Activated T-helper 1 cell treated with anti-CD3 and anti-CD28 coated beads, Interleukin-12 subunit alpha, Interleukin-12 subunit beta, Interleukin-2, Interleukin-4 antibody, amounts not matched to agents 30 ng/mL and 10 ng/mL and 1 ng/mL, durations not matched to agents 14 hours and 24 hours and 36 hours (primary cell): ENCODE measurements at regions of chr18 and their contacts with region 1.

Region 1: DNA sequence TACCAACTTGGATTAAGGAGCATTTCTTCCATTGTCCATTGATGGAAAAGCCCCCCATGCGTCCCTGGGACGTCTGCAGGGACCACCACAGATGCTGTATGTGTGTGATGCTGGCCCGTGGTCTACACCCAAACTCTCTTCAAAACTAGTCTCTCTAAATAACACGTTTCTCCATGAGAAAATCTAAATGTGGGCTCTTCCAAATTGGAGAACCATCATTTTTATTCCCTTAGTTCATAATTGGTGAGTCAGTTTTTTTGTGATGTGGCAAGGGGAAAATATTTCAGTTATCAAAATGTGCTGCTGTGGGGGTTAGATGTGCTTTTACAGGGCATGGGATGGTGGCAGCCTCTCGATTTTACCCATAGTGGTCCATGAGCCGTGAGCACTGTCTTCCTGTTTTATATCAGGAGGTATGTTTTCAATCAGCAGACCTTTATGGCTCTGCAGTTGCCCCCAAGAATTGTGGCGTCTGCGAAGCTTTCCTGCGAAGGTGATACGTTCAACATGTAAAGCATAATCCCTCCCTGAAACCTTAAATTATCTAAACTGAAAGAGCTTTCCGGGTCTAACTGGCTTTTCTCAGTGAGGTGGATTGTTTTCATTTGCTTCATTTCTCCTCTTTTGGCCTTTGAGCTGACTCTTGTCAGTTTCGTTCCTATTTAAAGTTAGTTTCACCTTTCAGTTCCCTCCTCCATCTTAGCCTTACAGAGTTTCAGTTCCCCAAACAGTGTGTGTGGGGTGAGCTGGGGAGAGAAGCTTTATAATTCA is 78.4 kb downstream of the SETBP1 start:
- DNase-seq: peak; percentile 14
- H3K4me3 Mint-ChIP-seq: peak overlapping the region; percentile 75
- H3K27ac Mint-ChIP-seq: peak overlapping the region; percentile 98
- H3K4me1 Mint-ChIP-seq: peaks cover 51% of the 10 kb centered on the region
- H3K27me3 Mint-ChIP-seq: peaks cover 5% of the 10 kb centered on the region

Region 2: GRCh38 chr18:44725300-44726096 is 33.5 kb before region 1 on chr18:
- intact Hi-C with region 1: loop called (anchors 1 kb)
- DNase-seq: peak; percentile 72
- H3K4me3 Mint-ChIP-seq: peak overlapping the region; percentile 38
- H3K27ac Mint-ChIP-seq: peak overlapping the region; percentile 88
- H3K4me1 Mint-ChIP-seq: peaks cover 96% of the 10 kb centered on the region
- H3K27me3 Mint-ChIP-seq: no peaks in the 10 kb centered on the region

Region 3: DNA sequence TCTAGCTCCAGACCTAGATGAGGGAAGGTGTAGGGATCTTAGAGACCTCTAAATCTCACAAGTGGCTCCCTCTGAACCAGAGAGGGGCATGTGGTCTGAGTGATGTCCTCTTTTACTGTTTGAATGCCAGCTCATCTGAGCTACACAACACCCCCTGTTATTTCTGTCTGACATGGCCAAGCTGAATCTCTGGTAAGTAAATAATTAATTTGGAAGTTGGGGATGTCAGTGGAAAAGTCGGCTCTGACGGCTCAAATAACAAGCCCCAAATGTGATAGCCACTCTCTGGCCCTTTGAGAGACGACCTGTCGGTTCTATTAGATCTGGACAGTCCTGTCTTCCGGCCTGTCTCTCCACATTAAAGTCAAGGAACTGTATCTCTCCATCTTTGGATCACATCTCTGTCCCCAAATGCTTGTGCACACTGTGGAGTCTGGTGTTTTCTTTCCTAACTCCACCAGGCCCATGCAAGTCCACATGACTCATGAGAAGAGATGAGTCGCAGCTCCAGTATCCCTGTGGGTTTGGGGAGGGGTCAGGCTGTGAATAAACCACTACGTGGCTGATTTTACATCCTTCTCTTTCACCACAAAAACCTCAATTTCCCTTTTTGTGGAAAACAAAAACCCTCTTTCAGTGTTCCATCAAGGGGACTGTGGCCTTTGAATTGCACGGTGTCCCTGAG is 25.8 kb before region 1 on chr18:
- intact Hi-C with region 1: loop called (anchors 1 kb)
- DNase-seq: peak; percentile 11
- H3K4me3 Mint-ChIP-seq: peak overlapping the region; percentile 61
- H3K27ac Mint-ChIP-seq: peak overlapping the region; percentile 79
- H3K4me1 Mint-ChIP-seq: peaks cover 79% of the 10 kb centered on the region
- H3K27me3 Mint-ChIP-seq: no peaks in the 10 kb centered on the region

Region 4: DNA sequence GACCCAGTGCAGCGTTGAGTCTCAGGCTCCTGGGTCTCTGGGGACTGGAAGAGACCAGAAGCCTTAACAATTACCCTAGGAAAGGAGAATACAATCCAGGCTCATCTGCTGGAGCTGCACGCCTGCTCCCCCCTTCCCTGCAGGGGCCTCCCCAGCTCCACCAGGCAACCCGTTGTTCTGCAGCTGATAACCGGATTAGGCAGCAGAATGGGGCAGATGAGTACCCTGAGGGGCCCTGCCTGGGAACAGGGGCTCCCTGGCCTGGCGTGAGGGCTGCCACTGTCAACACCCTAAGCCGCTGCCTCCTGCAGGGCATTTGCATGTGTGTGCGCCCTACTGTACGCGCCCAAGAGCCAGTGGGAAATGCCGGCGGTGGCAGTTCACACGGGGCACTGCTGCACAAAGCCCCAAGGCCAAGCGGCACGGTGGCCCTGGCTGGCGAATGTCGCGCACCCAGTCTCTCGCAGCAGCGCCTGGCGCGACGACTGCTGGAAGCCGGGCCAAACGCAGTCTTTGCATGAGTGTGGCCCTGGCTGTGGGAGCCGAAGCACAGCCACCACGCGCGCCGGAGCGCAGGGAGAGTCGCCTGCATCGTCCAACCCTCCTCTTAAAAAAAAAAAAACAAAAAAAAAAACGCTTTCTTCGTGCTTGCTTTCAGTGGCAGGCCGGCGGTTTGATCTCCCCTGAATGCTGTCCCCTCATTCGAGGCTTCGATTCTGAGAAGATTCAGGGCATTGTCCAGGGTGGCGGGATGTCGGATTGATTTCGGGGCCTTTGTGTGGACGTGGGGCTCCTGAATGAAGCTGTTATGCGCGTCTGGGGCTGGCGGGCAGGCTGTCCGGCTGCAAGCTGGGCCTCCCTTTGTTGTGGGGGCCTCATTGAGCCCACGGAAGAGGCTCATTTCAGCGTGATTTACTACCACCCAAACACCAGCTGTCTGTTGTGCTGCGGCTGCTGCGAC is 14.6 kb before region 1 on chr18:
- intact Hi-C with region 1: no loop called
- DNase-seq: no peak
- H3K4me3 Mint-ChIP-seq: no peak overlapping the region
- H3K27ac Mint-ChIP-seq: no peak overlapping the region
- H3K4me1 Mint-ChIP-seq: peaks cover 17% of the 10 kb centered on the region
- H3K27me3 Mint-ChIP-seq: peaks cover 18% of the 10 kb centered on the region

Region 5: GRCh38 chr18:44838971-44839666 is 80.1 kb after region 1 on chr18:
- intact Hi-C with region 1: loop called (anchors 2 kb)
- DNase-seq: peak; percentile 73
- H3K4me3 Mint-ChIP-seq: peak overlapping the region; percentile 40
- H3K27ac Mint-ChIP-seq: peak overlapping the region; percentile 59
- H3K4me1 Mint-ChIP-seq: peaks cover 56% of the 10 kb centered on the region
- H3K27me3 Mint-ChIP-seq: peaks cover 5% of the 10 kb centered on the region